PC-3 (cell line): ENCODE measurements at regions of chr2 and their contacts with region 1.

Region 1: GRCh38 chr2:190511104-190511503 is 23.4 kb downstream of the NEMP2 start:
- DNase-seq: peak; percentile 61
- ATAC-seq: peak; percentile 59
- H3K4me3 ChIP-seq: no peak overlapping the region
- H3K27ac ChIP-seq: no peak overlapping the region
- H3K4me1 ChIP-seq: no peaks in the 10 kb centered on the region
- H3K27me3 ChIP-seq: no peaks in the 10 kb centered on the region
- CTCF ChIP-seq: peak; percentile 82

Region 2: DNA sequence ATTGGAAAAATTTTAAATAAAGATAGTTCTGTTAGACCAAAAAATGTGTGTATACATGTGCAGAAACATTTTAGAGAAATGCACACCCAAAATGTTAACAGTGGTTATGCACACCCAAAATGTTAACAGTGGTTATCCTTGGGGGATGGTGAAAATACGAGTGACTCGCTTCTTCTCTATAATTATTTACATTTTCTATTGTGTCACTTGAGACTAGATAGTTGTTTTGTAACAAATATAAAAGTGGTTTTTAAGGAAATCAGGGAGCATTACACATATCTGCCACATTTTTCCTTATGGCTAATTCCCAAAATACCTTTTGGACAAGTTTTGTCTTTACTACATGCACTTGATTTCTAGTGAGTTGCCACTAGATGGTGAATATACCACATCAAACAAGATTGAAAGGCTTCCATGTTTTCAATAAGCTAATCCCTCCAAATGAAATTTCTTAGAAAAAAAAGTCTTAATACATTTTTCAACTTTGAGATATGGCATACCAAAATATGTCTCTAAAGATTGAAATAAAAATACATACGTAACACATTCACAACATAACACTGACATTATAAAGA is 182.4 kb before region 1 on chr2:
- CTCF ChIA-PET with region 1: no interaction called
- POLR2A ChIA-PET with region 1: no interaction called
- intact Hi-C with region 1: loop called (anchors 2 kb)
- DNase-seq: peak; percentile 22
- ATAC-seq: peak; percentile 35; the same call in 1 of the 2 replicates
- H3K4me3 ChIP-seq: no peak overlapping the region
- H3K27ac ChIP-seq: no peak overlapping the region
- H3K4me1 ChIP-seq: no peaks in the 10 kb centered on the region
- H3K27me3 ChIP-seq: no peaks in the 10 kb centered on the region
- CTCF ChIP-seq: peak; percentile 51

Region 3: DNA sequence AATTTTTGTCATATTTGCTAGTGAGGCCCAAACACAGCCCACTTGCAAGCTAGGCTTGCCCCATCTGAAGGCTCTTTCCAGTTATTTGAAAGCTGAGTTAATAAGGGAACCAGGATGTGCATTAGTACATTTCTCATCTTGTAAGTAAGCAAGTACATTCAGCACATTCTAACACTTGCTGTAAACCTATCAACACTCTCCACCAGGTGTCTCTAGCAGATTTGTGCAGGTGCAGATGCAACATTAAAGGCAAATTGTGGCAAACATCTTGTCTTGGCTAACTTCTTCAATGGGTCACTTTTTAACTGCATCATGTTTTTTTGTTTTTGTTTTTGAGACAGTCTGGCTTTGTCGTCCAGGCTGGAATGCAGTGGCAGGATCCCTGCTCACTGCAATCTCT is 128.3 kb before region 1 on chr2:
- CTCF ChIA-PET with region 1: no interaction called
- POLR2A ChIA-PET with region 1: no interaction called
- intact Hi-C with region 1: loop called (anchors 1 kb)
- DNase-seq: peak; percentile 72
- ATAC-seq: peak; percentile 42
- H3K4me3 ChIP-seq: no peak overlapping the region
- H3K27ac ChIP-seq: no peak overlapping the region
- H3K4me1 ChIP-seq: peaks cover 11% of the 10 kb centered on the region
- H3K27me3 ChIP-seq: no peaks in the 10 kb centered on the region
- CTCF ChIP-seq: peak; percentile 80

Region 4: DNA sequence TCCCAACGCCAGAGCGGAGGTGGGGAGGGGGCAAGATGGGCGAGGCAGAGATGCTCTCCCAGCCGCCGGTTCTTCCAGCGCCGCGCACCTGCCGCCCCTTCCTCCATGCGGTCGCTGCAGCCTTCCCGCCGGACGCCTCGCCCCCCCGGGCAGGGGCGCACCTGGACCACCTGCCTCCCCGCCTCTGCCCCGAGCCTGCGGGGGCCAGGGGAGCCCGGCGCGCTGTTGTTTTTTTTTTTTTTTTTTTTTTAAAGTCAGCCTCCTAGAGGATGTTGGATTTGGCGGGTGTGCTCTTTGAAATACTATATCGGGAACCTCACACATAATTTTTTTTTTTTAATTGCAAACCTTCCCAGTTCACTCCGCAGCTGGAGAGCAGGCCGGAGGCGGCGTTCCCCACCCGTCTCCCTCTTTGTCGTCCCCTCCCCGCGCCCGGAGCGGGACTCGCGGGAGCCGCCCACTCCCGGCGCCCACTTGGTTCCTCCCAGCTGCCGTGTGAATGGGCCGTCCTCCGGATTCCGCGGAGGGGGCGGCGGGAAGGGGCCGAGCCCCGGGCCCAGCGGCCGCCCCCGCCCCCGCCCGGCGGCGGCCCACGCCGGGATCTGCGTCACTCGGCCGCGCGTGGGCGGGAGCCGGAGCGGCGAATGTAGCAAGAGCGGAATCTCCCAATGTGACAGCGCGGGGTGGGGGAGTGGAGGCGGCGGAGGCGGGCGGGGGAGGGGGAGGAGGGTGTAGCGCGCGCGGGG is 137.4 kb after region 1 on chr2:
- CTCF ChIA-PET with region 1: no interaction called
- POLR2A ChIA-PET with region 1: no interaction called
- intact Hi-C with region 1: loop called (anchors 5 kb)
- DNase-seq: peak; percentile 87
- ATAC-seq: peak; percentile 68
- H3K4me3 ChIP-seq: peak overlapping the region; percentile 88
- H3K27ac ChIP-seq: peak overlapping the region; percentile 59
- H3K4me1 ChIP-seq: peaks cover 21% of the 10 kb centered on the region
- H3K27me3 ChIP-seq: no peaks in the 10 kb centered on the region
- CTCF ChIP-seq: no peak